ENCODE measurements at regions of chr12 and their contacts with region 1.

Region 1: DNA sequence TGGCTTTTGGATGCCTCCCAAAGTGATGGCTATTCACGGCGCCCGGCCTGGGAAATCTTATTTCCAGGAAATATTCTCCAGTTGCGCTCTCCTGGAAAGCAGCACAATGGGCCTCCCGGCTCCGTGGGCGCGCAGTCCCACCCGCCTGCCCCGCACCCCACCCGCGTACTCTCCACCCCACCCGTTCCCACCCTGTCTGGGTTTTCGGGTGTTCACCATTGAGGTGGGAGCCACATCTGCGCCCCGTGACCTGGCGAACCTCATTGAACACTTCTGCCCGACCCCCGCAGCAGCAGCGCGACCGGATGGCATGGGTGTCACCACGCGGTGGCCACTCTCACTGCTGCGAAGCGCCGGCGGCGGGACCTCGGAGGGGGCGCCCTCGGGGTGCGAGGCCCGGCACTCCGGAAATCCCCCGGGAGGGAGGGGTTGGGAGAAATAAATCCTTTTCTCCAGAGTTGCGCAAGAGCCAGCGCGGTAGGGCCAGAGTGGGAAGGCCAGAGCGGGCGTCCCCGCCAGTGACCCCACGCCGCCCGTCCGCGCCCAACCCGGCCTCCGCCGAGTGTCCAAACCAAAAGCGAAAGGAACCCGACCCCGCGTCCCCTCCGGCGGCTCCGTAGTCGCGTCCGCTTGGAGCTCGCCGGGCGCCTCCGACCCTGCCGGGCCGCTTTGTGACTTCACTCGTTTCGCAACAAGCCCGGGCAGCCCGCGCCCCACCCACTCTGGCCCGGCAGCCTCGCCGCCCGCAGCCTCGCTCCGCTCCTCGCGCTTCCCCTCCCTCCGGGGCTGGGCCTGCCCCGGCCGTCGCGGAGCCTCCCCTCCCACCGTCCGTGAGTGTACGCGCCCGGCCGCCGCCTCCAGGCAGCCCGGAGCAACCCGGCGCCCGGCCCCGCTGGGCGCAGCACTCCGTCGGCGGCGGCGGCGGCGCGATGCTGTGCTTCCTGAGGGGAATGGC is at the start of gene DRAM1:
- DNase-seq: peak; percentile 90
- CTCF ChIP-seq: peak; percentile 28

Region 2: GRCh38 chr12:101863981-101864380 is 13.2 kb before region 1 on chr12:
- CTCF ChIA-PET with region 1: interaction called, 18 read pairs
- POLR2A ChIA-PET with region 1: no interaction called
- DNase-seq: no peak
- CTCF ChIP-seq: no peak

Region 3: GRCh38 chr12:101891462-101892273 is 14.5 kb after region 1 on chr12:
- CTCF ChIA-PET with region 1: interaction called, 14 read pairs
- POLR2A ChIA-PET with region 1: interaction called, 12 read pairs
- DNase-seq: peak; percentile 37
- CTCF ChIP-seq: no peak

Measured in GM10248 (cell line).